GM12878 (cell line): ENCODE measurements at regions of chr3 and their contacts with region 1.

Region 1: GRCh38 chr3:131730600-131730999 is 227.8 kb upstream of the MRPL3 start:
- DNase-seq: no peak
- ATAC-seq: peak; percentile 14; the same call in 2 of the 3 replicates
- H3K4me3 ChIP-seq: no peak overlapping the region
- H3K27ac ChIP-seq: no peak overlapping the region
- H3K4me1 ChIP-seq: peaks cover 26% of the 10 kb centered on the region
- H3K27me3 ChIP-seq: no peaks in the 10 kb centered on the region
- CTCF ChIP-seq: no peak
- EP300 ChIP-seq: no peak
- POLR2A ChIP-seq: no peak
- RAD21 ChIP-seq: no peak

Region 2: DNA sequence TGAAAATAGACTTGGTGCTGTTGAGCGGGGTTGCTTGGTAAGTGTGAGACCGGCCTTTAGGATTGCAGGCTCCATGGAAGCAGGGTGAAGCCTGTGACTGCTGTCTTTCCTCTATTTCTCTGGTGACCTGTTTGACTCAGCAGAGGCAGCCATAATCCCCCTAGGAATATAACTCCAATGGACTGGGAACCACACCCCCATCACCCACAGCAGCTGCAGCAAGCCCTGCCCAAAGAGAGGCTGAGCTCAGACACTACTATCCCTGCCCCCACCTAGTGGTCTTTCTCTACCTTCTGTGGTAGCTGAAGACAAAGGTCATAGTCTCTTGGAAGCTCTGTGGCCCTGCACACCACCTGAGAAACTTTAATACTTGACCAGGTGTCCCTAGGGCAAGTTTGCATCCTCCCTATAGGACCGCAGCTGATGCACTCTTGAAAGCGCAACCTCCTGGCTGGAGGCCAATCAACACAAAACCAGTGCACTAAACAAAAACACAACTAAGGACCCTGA is 94.3 kb before region 1 on chr3:
- CTCF ChIA-PET with region 1: no interaction called
- POLR2A ChIA-PET with region 1: no interaction called
- RAD21 ChIA-PET with region 1: no interaction called
- SMC1A ChIA-PET with region 1: no interaction called
- in situ Hi-C with region 1: no loop called
- intact Hi-C with region 1: no loop called
- DNase-seq: no peak
- ATAC-seq: no peak
- H3K4me3 ChIP-seq: no peak overlapping the region
- H3K27ac ChIP-seq: no peak overlapping the region
- H3K4me1 ChIP-seq: no peaks in the 10 kb centered on the region
- H3K27me3 ChIP-seq: no peaks in the 10 kb centered on the region
- CTCF ChIP-seq: no peak
- EP300 ChIP-seq: no peak
- POLR2A ChIP-seq: no peak
- RAD21 ChIP-seq: no peak

Region 3: DNA sequence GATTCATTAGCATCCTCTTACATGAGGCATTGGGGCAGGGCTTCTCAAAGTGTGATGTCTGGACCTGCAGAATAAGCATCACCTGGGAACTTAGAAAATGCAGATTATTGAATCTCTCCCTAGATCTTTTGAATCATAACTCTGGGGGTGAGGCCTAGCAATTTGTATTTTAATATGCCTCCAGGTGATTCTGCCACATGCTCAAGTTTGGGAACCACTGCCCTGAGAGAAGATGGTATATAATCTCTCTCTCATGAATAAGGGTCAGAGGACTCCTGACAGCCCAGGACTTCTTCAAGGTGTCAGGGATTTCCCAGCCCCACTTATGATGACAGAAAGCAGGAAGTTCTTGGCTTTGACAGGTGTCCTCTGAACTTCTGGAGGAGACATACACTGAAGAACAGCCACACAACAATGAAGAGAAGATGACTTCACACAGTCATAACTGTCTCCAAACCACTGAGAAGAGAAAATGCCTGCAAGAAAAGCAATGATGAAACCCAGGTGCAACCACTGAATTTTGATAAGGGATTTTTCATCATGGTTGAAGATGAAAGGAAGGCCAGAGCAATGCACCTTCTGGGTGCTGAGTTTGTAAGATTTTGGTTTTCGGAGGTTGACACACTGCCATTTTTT is 15.9 kb before region 1 on chr3:
- CTCF ChIA-PET with region 1: interaction called, 6 read pairs
- POLR2A ChIA-PET with region 1: no interaction called
- RAD21 ChIA-PET with region 1: interaction called, 5 read pairs
- SMC1A ChIA-PET with region 1: interaction called, 11 read pairs
- in situ Hi-C with region 1: no loop called
- intact Hi-C with region 1: loop called (anchors 2 kb)
- DNase-seq: peak; percentile 71
- ATAC-seq: peak; percentile 73
- H3K4me3 ChIP-seq: no peak overlapping the region
- H3K27ac ChIP-seq: peak overlapping the region; percentile 23; the same call in 1 of the 2 replicates
- H3K4me1 ChIP-seq: peaks cover 47% of the 10 kb centered on the region
- H3K27me3 ChIP-seq: no peaks in the 10 kb centered on the region
- CTCF ChIP-seq: no peak
- EP300 ChIP-seq: peak in 1 of 2 experiments; percentile 76; a peak in 2 of 4 replicates
- POLR2A ChIP-seq: no peak
- RAD21 ChIP-seq: peak; percentile 20; the same call in 1 of the 2 replicates

Region 4: GRCh38 chr3:132029182-132029902 is 298.7 kb after region 1 on chr3:
- CTCF ChIA-PET with region 1: no interaction called
- POLR2A ChIA-PET with region 1: no interaction called
- RAD21 ChIA-PET with region 1: interaction called, 3 read pairs
- SMC1A ChIA-PET with region 1: interaction called, 4 read pairs
- in situ Hi-C with region 1: no loop called
- intact Hi-C with region 1: loop called (anchors 1 kb)
- DNase-seq: no peak
- ATAC-seq: peak; percentile 99
- H3K4me3 ChIP-seq: no peak overlapping the region
- H3K27ac ChIP-seq: no peak overlapping the region
- H3K4me1 ChIP-seq: no peaks in the 10 kb centered on the region
- H3K27me3 ChIP-seq: peaks cover 0 to 1% of the 10 kb centered on the region in 2 experiments; a peak in 1 of 4 replicates
- CTCF ChIP-seq: peak; percentile 89 to 92 (median 92); a peak in 5 of 6 replicates
- EP300 ChIP-seq: no peak
- POLR2A ChIP-seq: no peak
- RAD21 ChIP-seq: peak; percentile 94